ENCODE measurements at regions of chr4 and their contacts with region 1.

Region 1: GRCh38 chr4:140688711-140689598 is 67.2 kb downstream of the TBC1D9 start:
- DNase-seq: no peak
- ATAC-seq: no peak
- H3K4me3 ChIP-seq: no peak overlapping the region
- H3K4me3 Mint-ChIP-seq: no peak overlapping the region
- H3K27ac ChIP-seq: no peak overlapping the region
- H3K27ac Mint-ChIP-seq: no peak overlapping the region
- H3K4me1 ChIP-seq: no peaks in the 10 kb centered on the region
- H3K4me1 Mint-ChIP-seq: no peaks in the 10 kb centered on the region
- H3K27me3 ChIP-seq: no peaks in the 10 kb centered on the region
- H3K27me3 Mint-ChIP-seq: peaks cover 3 to 8% of the 10 kb centered on the region in 2 donors

Region 2: DNA sequence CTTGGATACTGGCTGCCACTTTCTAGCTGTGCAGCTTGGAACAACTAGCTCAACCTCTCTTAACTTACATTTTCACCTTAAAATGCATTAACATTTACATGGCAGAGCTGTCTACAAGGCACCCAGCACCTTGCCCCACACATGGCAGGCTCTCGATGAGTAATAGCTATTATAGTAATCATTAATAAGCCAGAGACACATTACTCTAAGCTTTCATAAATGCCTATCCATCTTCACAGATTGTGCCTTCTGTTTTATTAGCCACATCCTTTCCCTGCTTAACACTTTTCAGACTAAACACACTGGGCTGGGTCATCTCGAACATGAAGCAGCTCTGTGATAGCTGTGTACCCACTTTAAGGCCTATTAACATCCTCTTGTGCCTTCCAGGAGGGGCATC is 36.4 kb before region 1 on chr4:
- CTCF ChIA-PET with region 1: no interaction called
- POLR2A ChIA-PET with region 1: interaction called in 1 of 2 experiments, 10 read pairs
- DNase-seq: no peak
- ATAC-seq: no peak
- H3K4me3 ChIP-seq: no peak overlapping the region
- H3K4me3 Mint-ChIP-seq: no peak overlapping the region
- H3K27ac ChIP-seq: no peak overlapping the region
- H3K27ac Mint-ChIP-seq: no peak overlapping the region
- H3K4me1 ChIP-seq: no peaks in the 10 kb centered on the region
- H3K4me1 Mint-ChIP-seq: no peaks in the 10 kb centered on the region
- H3K27me3 ChIP-seq: no peaks in the 10 kb centered on the region
- H3K27me3 Mint-ChIP-seq: peaks cover 16 to 25% of the 10 kb centered on the region in 2 donors

Measured in T-cell (primary cell).